A549 (cell line): ENCODE measurements at regions of chr7 and their contacts with region 1.

Region 1: GRCh38 chr7:26365077-26365900 is 73.6 kb downstream of the SNX10 start:
- DNase-seq: peak; percentile 19 to 74
- ATAC-seq: peak; percentile 76 to 83
- H3K4me3 ChIP-seq: no peak overlapping the region
- H3K27ac ChIP-seq: no peak overlapping the region
- H3K4me1 ChIP-seq: peaks cover 7% of the 10 kb centered on the region; the same call in 1 of the 3 replicates
- CTCF ChIP-seq: peak; percentile 94
- EP300 ChIP-seq: no peak
- POLR2A ChIP-seq: no peak
- RAD21 ChIP-seq: peak; percentile 96 to 98

Region 2: DNA sequence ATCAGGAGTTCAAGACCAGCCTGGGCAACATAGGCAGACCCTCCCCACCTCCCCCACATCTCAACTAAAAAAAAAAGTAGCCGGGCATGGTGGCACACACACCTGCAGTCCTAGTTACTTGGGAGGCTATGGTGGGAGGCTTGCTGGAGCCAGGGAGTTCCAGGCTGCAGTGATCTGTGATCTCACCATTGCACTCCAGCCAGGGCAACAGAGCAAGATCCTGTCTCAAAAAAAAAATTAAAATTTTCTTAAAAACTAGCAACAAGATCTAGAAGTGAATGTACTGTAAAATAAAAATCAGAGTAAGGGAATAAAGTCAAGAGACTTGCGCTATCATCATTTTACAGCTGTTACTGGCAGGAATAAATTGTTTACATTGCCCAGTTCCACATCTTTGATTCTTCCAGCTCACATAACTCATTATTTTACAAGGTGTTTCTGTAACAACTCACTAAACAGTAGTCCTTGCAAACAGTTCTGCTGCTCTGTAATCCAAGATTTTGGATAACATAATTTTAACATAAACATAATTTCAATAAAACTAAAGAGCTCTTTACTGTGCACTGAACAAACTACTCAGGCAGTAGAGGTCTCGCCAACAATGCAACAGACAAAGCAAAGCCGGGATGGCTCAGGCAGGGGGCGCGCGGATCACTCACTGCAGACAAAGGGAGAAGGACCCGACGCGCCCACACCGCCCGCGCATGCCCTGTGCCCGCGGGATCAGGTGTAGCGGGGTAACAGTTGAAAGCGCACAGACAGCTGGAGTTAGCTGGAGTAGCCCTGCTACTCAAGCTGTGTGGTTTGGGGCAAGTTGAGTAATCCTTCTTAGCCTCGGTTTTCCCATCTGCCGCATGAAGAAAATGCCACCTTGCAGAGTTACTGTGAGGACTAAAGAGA is 286.6 kb before region 1 on chr7:
- CTCF ChIA-PET with region 1: interaction called, 26 read pairs
- POLR2A ChIA-PET with region 1: no interaction called
- DNase-seq: peak; percentile 69 to 78
- ATAC-seq: peak; percentile 99 to 100
- H3K4me3 ChIP-seq: peak overlapping the region; percentile 34; the same call in 1 of the 3 replicates
- H3K27ac ChIP-seq: no peak overlapping the region
- H3K4me1 ChIP-seq: peaks cover 6% of the 10 kb centered on the region; the same call in 1 of the 3 replicates
- CTCF ChIP-seq: peak; percentile 58
- EP300 ChIP-seq: no peak
- POLR2A ChIP-seq: no peak
- RAD21 ChIP-seq: peak; percentile 63 to 64; a peak in 4 of 5 replicates

Region 3: DNA sequence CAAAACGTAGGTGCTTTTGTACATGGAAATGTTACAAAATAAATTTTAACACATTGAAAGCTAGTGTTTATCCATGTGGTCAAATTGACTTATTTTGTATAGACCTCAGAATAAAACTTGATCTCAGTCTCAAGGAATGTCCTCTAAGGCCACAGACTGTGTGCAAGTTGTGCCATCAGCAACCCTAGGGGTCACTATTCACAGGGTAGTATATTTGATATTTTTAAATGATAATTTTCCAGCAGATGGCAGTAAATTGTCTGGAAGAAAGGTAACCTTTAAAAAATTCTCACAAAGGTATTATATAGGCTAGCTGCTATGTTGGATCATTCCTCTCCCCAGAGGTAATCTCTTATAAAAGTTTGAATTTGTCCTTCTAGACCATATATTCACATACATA is 86.5 kb before region 1 on chr7:
- CTCF ChIA-PET with region 1: interaction called, 41 read pairs
- POLR2A ChIA-PET with region 1: no interaction called
- DNase-seq: peak; percentile 47 to 55
- ATAC-seq: peak; percentile 94
- H3K4me3 ChIP-seq: no peak overlapping the region
- H3K27ac ChIP-seq: no peak overlapping the region
- H3K4me1 ChIP-seq: no peaks in the 10 kb centered on the region
- CTCF ChIP-seq: peak; percentile 89
- EP300 ChIP-seq: no peak
- POLR2A ChIP-seq: no peak
- RAD21 ChIP-seq: peak; percentile 55 to 62; a peak in 4 of 5 replicates

Region 4: GRCh38 chr7:26348234-26348851 is 16.9 kb before region 1 on chr7:
- CTCF ChIA-PET with region 1: interaction called, 13 read pairs
- POLR2A ChIA-PET with region 1: no interaction called
- DNase-seq: no peak
- ATAC-seq: no peak
- H3K4me3 ChIP-seq: no peak overlapping the region
- H3K27ac ChIP-seq: no peak overlapping the region
- H3K4me1 ChIP-seq: 0 out of 3 replicates have a peak, but pooled peaks cover 5% of the 10 kb centered on the region
- CTCF ChIP-seq: no peak
- EP300 ChIP-seq: no peak
- POLR2A ChIP-seq: no peak
- RAD21 ChIP-seq: no peak

Region 5: DNA sequence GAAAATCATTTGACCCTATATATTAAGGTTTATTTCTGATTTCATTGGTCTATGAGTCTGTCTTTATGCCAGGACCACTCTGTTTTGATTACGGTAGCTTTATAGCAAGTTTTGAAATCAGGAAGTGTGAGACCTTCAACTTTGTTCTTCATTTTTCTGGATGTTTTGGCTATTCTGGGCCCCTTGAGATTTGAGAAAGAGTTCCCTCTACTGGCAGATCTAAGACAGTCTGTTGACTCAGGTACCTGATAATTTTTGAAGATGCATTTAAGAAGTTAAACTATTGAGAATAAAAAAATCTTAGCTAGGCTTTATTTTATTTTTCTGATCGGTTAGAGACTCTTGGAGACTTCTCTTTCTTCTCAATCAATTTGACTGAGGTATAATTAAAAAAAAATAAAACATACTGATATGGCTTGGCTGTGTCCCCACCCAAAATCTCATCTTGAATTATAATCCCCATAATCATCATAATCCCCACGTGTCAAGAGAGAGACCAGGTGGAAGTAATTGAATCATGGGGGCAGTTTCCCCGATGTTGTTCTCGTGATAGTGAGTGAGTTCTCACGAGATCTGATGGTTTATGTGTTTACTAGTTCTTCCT is 135.6 kb after region 1 on chr7:
- CTCF ChIA-PET with region 1: interaction called, 10 read pairs
- POLR2A ChIA-PET with region 1: no interaction called
- DNase-seq: peak; percentile 26 to 49
- ATAC-seq: peak; percentile 74 to 79; a peak in 4 of 6 replicates
- H3K4me3 ChIP-seq: no peak overlapping the region
- H3K27ac ChIP-seq: no peak overlapping the region
- H3K4me1 ChIP-seq: 0 out of 3 replicates have a peak, but pooled peaks cover 5% of the 10 kb centered on the region
- CTCF ChIP-seq: peak; percentile 69
- EP300 ChIP-seq: no peak
- POLR2A ChIP-seq: no peak
- RAD21 ChIP-seq: peak; percentile 68 to 69